BJ (cell line): ENCODE measurements at regions of chr3 and their contacts with region 1.

Region 1: DNA sequence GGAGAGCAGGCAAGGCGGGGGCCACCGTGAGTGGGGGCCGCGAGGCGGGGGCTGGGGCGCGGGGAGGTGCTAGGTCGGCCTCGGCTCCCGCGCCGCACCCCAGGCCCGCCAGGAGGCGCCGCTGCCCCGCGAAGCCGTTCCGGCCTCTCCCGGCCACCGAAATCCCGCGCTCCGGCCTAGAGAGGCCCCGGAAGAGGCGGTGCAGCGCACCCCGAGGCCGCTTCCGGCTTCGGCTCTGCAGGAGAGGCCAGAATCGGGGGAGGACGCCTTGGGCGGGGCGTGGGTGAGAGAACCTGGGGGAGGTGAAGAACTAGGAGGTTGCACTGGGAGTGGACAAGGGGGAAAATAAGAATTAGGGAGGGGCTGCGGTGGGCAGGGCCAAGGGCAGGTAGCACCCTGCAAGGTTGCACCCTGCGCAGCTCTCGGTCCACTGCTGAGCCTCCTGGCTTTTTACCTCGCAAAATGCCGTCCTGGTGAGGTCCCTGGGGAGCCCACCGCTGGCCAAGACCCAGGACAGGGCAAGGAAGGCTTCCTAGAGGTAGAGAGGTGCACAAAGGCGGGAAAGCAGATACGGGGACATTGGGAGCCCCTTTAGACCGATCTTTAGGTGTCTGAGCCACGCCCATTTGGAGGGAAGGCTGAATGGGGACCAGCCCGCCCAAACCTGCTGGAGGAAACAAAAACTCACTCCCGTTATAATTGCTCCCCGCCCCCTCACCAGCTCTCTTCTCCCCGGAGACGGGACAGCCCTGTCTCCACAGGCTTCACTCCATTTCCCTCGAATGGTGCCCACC is 8.4 kb upstream of the GNAI2 start:
- DNase-seq: no peak
- H3K4me3 ChIP-seq: peak overlapping the region; percentile 83
- H3K27me3 ChIP-seq: peaks cover 7% of the 10 kb centered on the region
- CTCF ChIP-seq: peak; percentile 54

Region 2: DNA sequence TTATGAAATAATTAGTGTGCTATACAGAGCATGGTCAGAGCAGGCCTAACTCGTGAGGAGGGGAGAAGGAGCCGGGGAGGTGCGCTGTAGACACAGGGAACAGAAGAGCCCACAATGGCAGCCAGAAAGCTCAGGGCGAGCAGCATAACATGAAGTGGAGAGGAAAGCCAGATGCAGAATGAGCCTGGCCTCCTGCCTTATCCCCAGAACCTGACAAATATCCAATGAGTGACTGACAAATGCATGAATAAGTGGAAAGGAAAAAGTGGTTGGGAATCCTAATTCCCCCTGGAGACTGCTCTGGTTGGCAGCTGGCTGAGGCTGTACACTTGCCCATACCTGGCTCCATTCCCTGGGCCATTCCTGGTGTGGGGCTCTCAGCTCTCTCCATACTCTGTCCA is 314.7 kb before region 1 on chr3:
- CTCF ChIA-PET with region 1: no interaction called
- POLR2A ChIA-PET with region 1: no interaction called
- DNase-seq: no peak
- H3K4me3 ChIP-seq: no peak overlapping the region
- H3K27me3 ChIP-seq: no peaks in the 10 kb centered on the region
- CTCF ChIP-seq: no peak

Region 3: GRCh38 chr3:50121416-50122032 is 106.1 kb before region 1 on chr3:
- CTCF ChIA-PET with region 1: interaction called, 20 read pairs
- POLR2A ChIA-PET with region 1: interaction called, 5 read pairs
- DNase-seq: peak; percentile 20
- H3K4me3 ChIP-seq: no peak overlapping the region
- H3K27me3 ChIP-seq: no peaks in the 10 kb centered on the region
- CTCF ChIP-seq: peak; percentile 78

Region 4: DNA sequence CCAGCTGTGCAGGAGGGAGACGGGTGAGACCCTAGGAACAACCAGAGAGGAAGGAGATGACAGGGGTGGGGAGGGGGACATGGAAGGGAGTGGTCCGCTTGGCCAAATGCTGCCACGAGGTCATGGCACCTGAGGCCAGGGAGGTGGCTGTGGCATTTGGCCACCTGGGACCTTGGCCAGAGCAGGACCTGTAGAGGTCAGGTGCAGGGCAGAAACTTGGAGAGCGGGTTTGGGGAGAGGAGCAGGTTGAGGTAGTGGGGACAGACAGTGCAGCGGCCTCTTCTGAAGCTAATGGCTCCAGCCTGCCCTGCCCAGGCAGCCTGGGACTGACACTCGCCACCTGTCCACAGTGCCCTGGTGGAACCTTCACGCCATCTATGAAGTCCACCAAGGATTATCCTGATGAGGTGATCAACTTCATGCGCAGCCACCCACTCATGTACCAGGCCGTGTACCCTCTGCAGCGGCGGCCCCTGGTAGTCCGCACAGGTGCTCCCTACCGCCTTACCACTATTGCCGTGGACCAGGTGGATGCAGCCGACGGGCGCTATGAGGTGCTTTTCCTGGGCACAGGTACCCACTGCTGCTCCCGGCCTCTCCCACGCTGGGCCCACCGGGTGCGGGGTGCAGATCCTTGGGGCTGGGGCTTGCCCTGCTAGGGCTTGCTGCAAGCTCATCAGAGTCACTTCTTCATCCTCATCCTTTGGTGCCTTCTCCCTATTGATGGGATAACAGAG is 43.2 kb before region 1 on chr3:
- CTCF ChIA-PET with region 1: interaction called, 378 read pairs
- POLR2A ChIA-PET with region 1: no interaction called
- DNase-seq: no peak
- H3K4me3 ChIP-seq: no peak overlapping the region
- H3K27me3 ChIP-seq: no peaks in the 10 kb centered on the region
- CTCF ChIP-seq: no peak

Region 5: DNA sequence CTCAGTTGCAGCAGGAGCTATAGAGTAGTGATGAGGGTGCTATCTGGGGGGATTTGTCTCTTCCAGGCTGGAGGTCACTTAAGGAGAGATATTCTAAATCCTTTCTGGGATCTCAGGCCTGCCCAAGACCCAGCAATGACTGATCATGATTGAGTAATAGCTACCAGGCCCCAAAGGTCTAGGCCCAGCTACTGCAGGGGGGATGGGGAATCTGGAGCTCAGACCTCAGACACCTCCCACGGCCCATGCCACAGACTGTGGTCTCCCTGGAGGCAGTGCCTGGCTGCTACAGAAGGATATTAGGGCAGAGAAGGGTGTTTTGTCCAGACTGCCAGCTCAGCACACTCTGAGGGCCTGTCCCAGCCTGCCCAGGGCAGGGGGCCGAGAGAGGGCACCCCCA is 15.7 kb before region 1 on chr3:
- CTCF ChIA-PET with region 1: interaction called, 48 read pairs
- POLR2A ChIA-PET with region 1: no interaction called
- DNase-seq: no peak
- H3K4me3 ChIP-seq: no peak overlapping the region
- H3K27me3 ChIP-seq: peaks cover 4% of the 10 kb centered on the region
- CTCF ChIP-seq: no peak

Region 6: DNA sequence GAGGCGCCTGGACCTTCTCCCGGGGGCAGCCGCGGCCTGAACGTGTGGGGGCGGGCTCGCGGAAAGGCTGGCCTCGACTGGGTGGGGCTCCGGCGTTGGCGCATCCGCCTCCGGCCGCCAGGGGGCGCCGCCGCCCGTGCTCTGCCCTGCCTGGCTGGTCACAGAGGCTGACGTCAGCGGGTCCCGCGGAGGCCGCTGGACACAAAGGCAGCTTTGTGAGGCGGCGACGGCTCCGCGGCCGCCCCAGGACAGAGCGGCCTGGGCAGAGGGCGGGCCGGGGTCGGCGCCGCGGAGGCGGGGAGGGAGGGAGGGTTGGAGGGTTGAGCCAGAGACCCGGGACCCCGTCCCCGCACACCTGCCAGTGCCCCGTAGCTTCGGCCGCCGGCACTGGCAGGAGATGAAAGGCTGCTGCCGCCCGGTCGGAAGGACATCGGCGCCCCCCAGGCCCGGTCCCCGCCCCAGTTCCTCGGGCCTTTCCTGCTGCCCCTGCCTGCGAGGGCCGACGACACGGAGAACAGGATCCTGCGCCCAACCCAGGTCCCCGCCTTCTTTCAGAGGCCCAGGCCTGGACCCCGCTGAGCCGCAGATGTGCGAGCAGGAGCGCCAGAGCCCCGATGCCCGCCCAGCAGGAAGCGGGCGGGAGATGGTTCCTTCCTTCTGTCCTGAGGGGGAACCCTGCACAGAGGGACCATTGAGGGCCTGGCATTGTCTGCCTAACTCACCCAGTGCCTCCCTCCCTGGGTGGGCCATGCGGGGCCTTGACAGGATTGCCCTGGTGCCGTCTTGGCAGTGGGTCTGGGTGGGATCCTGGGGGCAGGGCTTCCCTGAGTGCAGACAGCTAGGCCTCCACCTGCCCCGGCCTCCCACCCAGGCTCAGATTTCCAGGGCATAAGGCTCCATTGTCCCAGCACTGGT is 32.7 kb after region 1 on chr3:
- CTCF ChIA-PET with region 1: interaction called, 114 read pairs
- POLR2A ChIA-PET with region 1: no interaction called
- DNase-seq: no peak
- H3K4me3 ChIP-seq: peak overlapping the region; percentile 51
- H3K27me3 ChIP-seq: no peaks in the 10 kb centered on the region
- CTCF ChIP-seq: peak; percentile 67

Region 7: DNA sequence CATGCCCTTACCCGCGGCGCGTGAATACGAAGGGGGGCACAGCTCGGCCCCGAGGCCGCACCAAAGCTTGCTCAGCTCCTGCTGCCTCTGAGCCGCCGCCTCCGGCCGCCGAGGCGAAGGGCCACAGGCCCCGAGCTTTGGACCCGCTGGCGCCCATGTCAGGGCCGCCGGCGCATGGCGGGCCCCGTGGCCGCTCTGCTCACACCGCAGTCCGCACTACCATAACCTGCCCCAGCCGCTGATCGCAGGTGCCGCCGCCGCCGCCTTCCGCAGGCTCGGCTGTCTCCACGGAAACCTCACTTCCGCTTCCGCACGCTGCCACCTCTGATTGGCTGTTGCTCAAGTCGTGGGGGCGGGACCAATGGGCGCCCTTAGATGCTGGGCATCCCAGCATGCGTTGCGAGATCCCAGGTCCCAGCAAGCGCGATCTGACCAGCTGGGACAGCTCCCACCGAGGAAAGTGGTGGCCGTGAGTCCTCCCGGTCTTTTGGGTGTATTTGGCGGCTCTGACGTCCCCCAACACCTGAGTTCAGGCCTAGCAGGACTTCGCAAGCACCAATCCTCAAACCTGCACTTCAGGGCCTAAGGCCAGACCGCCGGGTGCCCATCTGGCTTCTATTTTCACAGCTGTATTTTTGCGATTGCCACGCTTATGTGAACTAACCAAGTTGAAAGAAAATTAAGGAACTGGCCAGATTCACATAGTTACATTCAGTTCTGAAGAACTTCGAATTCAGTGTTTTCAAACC is 100.5 kb after region 1 on chr3 and contains the start of gene TUSC2:
- CTCF ChIA-PET with region 1: interaction called, 12 read pairs
- POLR2A ChIA-PET with region 1: no interaction called
- DNase-seq: peak; percentile 74
- H3K4me3 ChIP-seq: peak within 1 kb of the TSS; percentile 72
- H3K27me3 ChIP-seq: no peaks in the 10 kb centered on the region
- CTCF ChIP-seq: no peak
- polyA plus RNA-seq, gene TUSC2: 33.8 and 38.9 TPM in 2 replicates